CD4-positive, alpha-beta memory T cell (primary cell): ENCODE measurements at regions of chr1 and their contacts with region 1.

Region 1: DNA sequence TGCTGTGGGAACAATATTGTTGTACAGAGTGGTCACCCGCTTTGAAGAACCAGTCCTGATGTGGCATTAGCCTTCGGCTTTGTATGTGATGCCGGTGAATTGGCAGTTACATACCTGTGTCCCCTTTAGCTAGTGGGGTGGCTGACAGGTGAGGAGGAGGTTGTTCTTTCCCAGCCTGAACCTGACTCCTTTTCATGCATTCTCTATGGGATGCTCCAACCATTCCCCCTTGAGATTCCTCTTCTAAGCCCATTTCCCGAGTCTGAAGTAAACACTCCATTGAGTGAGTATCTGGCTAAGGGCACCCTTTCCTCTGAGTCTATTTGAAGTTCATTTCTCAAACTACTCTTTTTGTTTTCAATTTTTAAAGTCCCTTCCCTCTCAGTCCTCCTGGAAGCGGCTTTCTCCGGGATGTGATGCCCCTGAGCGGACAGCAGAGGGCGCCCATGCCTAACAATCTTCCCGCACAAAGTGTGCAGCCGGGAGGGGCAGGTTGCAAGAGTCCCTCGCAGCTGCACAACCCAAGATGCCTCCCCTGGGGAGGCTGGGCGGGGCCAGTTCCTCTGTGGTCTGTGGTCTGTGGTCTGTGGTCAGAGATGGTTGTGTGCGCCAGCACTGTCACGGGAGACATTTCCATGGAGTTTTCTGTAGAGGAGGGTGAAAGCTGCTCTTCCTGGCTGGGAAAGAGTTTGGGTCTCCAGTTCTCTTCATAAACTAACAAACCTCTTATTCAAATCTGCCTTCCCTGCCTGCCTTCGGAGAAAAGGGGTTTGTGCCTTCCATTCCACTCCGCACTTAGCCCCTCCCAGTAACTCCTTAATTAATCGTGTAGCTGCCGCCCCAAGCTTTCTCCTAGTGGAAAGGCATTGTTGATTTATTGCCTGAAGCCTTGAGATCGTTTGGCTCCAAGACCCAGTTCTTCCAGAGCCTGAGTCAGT is 36.4 kb upstream of the LMX1A start:
- DNase-seq: peak; percentile 91 to 93 (median 92)
- H3K4me3 ChIP-seq: peak overlapping the region in 1 of 2 donors; percentile 4
- H3K4me3 Mint-ChIP-seq: peak overlapping the region; percentile 63 to 84 (median 81)
- H3K27ac ChIP-seq: no peak overlapping the region
- H3K27ac Mint-ChIP-seq: peak overlapping the region; percentile 67 to 93 (median 83)
- H3K4me1 ChIP-seq: peaks cover 23% of the 10 kb centered on the region
- H3K4me1 Mint-ChIP-seq: peaks cover 14 to 26% (median 20%) of the 10 kb centered on the region in 4 donors
- H3K27me3 ChIP-seq: peaks cover 39% of the 10 kb centered on the region
- H3K27me3 Mint-ChIP-seq: peaks cover 40 to 53% of the 10 kb centered on the region in 2 donors

Region 2: DNA sequence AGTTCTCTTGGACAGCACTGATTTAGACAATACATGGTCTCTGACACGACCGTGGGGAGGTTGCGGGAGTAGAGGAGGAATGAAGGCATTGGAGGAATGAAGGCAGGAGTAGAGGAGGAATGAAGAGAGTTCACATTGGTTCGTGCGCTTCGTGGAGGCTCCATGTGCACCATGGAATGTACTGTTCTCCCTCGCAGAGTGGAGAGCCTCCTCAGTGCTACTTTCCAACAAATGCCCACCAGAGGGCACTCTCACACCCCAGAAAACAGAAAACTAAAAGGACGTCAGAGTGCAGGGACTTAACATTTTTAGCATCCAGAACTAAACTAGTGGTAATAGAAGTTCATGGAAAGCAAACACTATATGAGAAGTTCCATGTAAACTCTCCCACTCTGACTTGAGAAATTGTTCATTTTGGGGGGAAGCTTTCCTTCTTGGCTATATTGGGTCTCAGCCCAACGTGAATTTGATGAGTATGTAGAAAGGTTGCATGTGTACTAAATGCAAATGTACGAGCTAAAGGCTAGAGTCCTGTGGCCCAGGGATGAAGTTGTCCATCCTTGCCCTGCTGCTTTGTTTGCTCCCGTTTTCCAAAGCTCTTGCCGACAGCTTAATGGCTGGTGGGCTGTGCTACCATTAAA is 248.0 kb before region 1 on chr1:
- CTCF ChIA-PET with region 1: no interaction called
- POLR2A ChIA-PET with region 1: no interaction called
- intact Hi-C with region 1: loop called (anchors 2 kb)
- DNase-seq: peak in 1 of 5 donors; percentile 5
- H3K4me3 ChIP-seq: no peak overlapping the region
- H3K4me3 Mint-ChIP-seq: no peak overlapping the region
- H3K27ac ChIP-seq: no peak overlapping the region
- H3K27ac Mint-ChIP-seq: no peak overlapping the region
- H3K4me1 ChIP-seq: no peaks in the 10 kb centered on the region
- H3K4me1 Mint-ChIP-seq: peaks cover 0 to 3% (median 2%) of the 10 kb centered on the region in 4 donors
- H3K27me3 ChIP-seq: no peaks in the 10 kb centered on the region
- H3K27me3 Mint-ChIP-seq: peaks cover 0 to 9% of the 10 kb centered on the region in 2 donors

Region 3: GRCh38 chr1:165376041-165376810 is 16.7 kb before region 1 on chr1:
- CTCF ChIA-PET with region 1: interaction called, 30 read pairs
- POLR2A ChIA-PET with region 1: no interaction called
- intact Hi-C with region 1: no loop called
- DNase-seq: peak in 4 of 5 donors; percentile 7 to 45 (median 23)
- H3K4me3 ChIP-seq: no peak overlapping the region
- H3K4me3 Mint-ChIP-seq: peak overlapping the region; percentile 75 to 88 (median 80)
- H3K27ac ChIP-seq: no peak overlapping the region
- H3K27ac Mint-ChIP-seq: no peak overlapping the region
- H3K4me1 ChIP-seq: peaks cover 18% of the 10 kb centered on the region
- H3K4me1 Mint-ChIP-seq: peaks cover 16 to 26% (median 17%) of the 10 kb centered on the region in 4 donors
- H3K27me3 ChIP-seq: peaks cover 26% of the 10 kb centered on the region
- H3K27me3 Mint-ChIP-seq: peaks cover 49 to 53% of the 10 kb centered on the region in 2 donors

Region 4: GRCh38 chr1:165630629-165631341 is 237.9 kb after region 1 on chr1 and contains the start of gene MGST3:
- CTCF ChIA-PET with region 1: interaction called, 3 read pairs
- POLR2A ChIA-PET with region 1: no interaction called
- intact Hi-C with region 1: loop called (anchors 1 kb)
- DNase-seq: peak; percentile 93 to 97 (median 94)
- H3K4me3 ChIP-seq: peak within 1 kb of the TSS; percentile 86 to 97
- H3K4me3 Mint-ChIP-seq: no peak within 1 kb of the TSS
- H3K27ac ChIP-seq: peak within 1 kb of the TSS; percentile 69
- H3K27ac Mint-ChIP-seq: peak within 1 kb of the TSS in 1 of 7 donors; percentile 85
- H3K4me1 ChIP-seq: peaks cover 35% of the 10 kb centered on the region
- H3K4me1 Mint-ChIP-seq: peaks cover 15 to 22% (median 18%) of the 10 kb centered on the region in 4 donors
- H3K27me3 ChIP-seq: no peaks in the 10 kb centered on the region
- H3K27me3 Mint-ChIP-seq: no peaks in the 10 kb centered on the region
- total RNA-seq, gene MGST3: 67.6 to 74.0 TPM

Region 5: GRCh38 chr1:166479052-166479631 is 1086.2 kb after region 1 on chr1:
- CTCF ChIA-PET with region 1: interaction called, 3 read pairs
- POLR2A ChIA-PET with region 1: no interaction called
- intact Hi-C with region 1: loop called (anchors 2 kb)
- DNase-seq: peak; percentile 26 to 39 (median 38)
- H3K4me3 ChIP-seq: no peak overlapping the region
- H3K4me3 Mint-ChIP-seq: no peak overlapping the region
- H3K27ac ChIP-seq: no peak overlapping the region
- H3K27ac Mint-ChIP-seq: no peak overlapping the region
- H3K4me1 ChIP-seq: no peaks in the 10 kb centered on the region
- H3K4me1 Mint-ChIP-seq: peaks cover 0 to 2% (median 0%) of the 10 kb centered on the region in 4 donors
- H3K27me3 ChIP-seq: no peaks in the 10 kb centered on the region
- H3K27me3 Mint-ChIP-seq: no peaks in the 10 kb centered on the region

Region 6: GRCh38 chr1:166920561-166921475 is 1527.9 kb after region 1 on chr1:
- CTCF ChIA-PET with region 1: no interaction called
- POLR2A ChIA-PET with region 1: no interaction called
- intact Hi-C with region 1: no loop called
- DNase-seq: no peak
- H3K4me3 ChIP-seq: no peak overlapping the region
- H3K4me3 Mint-ChIP-seq: no peak overlapping the region
- H3K27ac ChIP-seq: no peak overlapping the region
- H3K27ac Mint-ChIP-seq: no peak overlapping the region
- H3K4me1 ChIP-seq: no peaks in the 10 kb centered on the region
- H3K4me1 Mint-ChIP-seq: peaks cover 0 to 1% (median 0%) of the 10 kb centered on the region in 4 donors
- H3K27me3 ChIP-seq: no peaks in the 10 kb centered on the region
- H3K27me3 Mint-ChIP-seq: peaks cover 20 to 41% of the 10 kb centered on the region in 2 donors